Activated naive CD4-positive, alpha-beta T cell treated with anti-CD3 and anti-CD28 coated beads for 36 hours (primary cell): ENCODE measurements at regions of chr1 and their contacts with region 1.

Region 1: GRCh38 chr1:41720861-41721410 is 197.8 kb downstream of the HIVEP3 start:
- DNase-seq: no peak
- H3K4me3 Mint-ChIP-seq: no peak overlapping the region
- H3K27ac Mint-ChIP-seq: no peak overlapping the region
- H3K4me1 Mint-ChIP-seq: peaks cover 32% of the 10 kb centered on the region
- H3K27me3 Mint-ChIP-seq: no peaks in the 10 kb centered on the region

Region 2: DNA sequence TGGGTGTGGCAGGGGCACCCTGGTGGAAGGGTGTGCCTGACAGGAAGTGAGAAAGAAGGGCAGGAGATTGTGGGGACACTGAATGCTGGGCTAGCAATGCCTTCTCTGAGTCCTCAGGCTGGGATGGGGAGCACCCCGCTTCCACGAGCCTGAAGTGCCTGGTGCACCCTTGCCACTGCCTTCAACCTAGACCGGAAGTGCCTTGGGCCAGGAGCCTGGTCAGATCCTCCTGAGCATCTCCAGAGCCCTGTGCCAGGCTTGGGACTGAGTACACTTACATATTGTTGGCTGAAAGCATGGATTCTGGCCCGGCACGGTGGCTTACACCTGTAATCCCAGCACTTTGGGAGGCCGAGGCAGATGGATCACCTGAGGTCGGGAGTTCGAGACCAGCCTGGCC is 30.6 kb before region 1 on chr1:
- CTCF ChIA-PET with region 1: no interaction called
- intact Hi-C with region 1: loop called (anchors 2 kb)
- DNase-seq: no peak
- H3K4me3 Mint-ChIP-seq: no peak overlapping the region
- H3K27ac Mint-ChIP-seq: no peak overlapping the region
- H3K4me1 Mint-ChIP-seq: peaks cover 42% of the 10 kb centered on the region
- H3K27me3 Mint-ChIP-seq: no peaks in the 10 kb centered on the region